Breast epithelium (tissue), 4 donors: ENCODE measurements at regions of chr6 and their contacts with region 1.

Region 1: GRCh38 chr6:34608321-34609091 is 52.4 kb upstream of the SPDEF start:
- DNase-seq: no peak
- H3K4me3 ChIP-seq: no peak overlapping the region
- H3K27ac ChIP-seq: no peak overlapping the region
- H3K4me1 ChIP-seq: no peaks in the 10 kb centered on the region
- H3K27me3 ChIP-seq: no peaks in the 10 kb centered on the region
- CTCF ChIP-seq: no peak
- POLR2A ChIP-seq: no peak

Region 2: DNA sequence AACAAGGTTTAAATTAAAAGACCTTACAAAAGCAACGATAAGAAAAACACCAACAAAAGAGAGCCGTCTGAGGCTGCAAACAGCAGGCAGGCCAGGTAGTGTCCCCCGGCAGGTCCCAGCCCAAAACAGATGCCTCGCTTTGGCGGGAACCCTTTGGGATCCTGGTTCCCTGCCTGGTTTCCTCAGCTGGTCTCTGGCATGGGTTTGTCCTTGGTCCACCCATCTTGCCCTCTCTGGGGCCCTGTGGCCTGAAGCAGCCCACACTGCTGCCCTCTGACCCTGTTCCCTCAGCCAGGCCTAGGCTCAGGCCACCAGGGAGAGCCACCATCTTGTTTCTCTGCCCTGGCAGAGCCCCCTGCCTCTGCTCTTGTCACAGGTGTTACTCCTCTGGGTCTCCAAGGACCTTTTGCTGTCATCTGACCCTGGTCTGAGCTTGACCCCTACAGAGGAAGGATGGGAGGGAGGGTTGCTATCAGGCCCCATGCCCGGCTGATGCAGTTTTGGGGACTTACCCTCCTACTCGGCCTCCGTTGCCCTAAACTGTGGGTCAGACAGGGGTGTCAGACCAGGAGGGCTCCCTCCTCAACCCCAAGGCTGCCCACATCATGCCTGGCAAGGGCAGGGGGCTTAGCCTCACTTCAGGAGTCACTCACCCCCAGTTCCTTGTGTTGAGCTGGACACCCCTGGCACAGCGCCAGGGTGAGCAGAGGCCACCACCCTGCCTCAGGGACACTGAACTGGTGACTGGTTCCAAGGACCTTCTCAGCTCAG is 432.1 kb before region 1 on chr6:
- intact Hi-C with region 1: loop called (anchors 5 kb)
- DNase-seq: no peak
- H3K4me3 ChIP-seq: no peak overlapping the region
- H3K27ac ChIP-seq: no peak overlapping the region
- H3K4me1 ChIP-seq: no peaks in the 10 kb centered on the region
- H3K27me3 ChIP-seq: no peaks in the 10 kb centered on the region
- CTCF ChIP-seq: no peak
- POLR2A ChIP-seq: no peak